MCF 10A (cell line): ENCODE measurements at regions of chr10 and their contacts with region 1.

Region 1: GRCh38 chr10:89793649-89794254 is 92.4 kb downstream of the KIF20B start:
- DNase-seq: peak; percentile 81
- H3K4me3 Mint-ChIP-seq: no peak overlapping the region
- H3K27ac Mint-ChIP-seq: no peak overlapping the region
- H3K4me1 Mint-ChIP-seq: no peaks in the 10 kb centered on the region
- H3K27me3 Mint-ChIP-seq: no peaks in the 10 kb centered on the region
- CTCF ChIP-seq: peak; percentile 70

Region 2: DNA sequence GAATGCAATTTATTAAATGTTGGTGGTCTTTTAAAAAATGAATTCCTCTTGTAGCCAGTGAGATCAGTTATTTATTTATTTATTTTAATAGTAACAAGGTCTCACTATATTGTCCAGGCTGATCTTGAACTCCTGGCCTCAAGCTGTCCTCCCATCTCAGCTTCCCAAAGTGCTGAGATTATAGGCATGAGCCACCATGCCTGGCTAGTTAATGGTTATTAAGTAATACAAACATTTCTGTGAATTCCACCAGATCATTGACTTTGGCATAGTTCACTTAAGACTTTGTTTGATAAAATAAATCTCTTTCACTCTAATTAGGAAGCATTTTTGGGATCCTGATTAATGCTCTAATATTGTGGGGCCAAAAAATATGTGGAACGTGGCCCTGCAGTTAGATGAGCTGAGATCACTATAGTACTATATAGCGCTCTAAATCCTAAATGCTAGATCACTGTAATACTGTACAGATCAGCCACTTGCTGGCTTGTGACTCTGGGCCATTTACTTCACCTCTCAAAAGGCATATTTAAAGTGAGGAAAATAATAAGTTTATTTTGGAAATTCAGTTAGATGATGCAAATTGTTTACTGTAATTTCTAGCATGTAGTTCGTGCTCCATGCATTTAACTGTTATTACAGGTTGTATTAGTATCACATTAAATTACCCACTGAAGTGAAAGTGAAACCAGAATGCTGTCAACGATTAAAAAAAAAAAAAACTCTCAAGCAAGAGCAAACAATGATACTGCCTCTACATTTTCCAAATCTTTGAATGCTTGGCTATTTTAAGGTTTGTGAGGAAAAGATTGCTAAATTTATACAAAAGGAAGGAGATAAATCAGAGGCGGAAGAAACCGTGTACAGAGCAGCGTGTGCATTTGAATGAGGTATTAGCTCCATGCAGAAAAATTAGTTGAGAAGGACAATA is 819.0 kb before region 1 on chr10:
- CTCF ChIA-PET with region 1: no interaction called
- POLR2A ChIA-PET with region 1: no interaction called
- intact Hi-C with region 1: no loop called
- DNase-seq: peak; percentile 38
- H3K4me3 Mint-ChIP-seq: peak overlapping the region; percentile 93
- H3K27ac Mint-ChIP-seq: peak overlapping the region; percentile 100
- H3K4me1 Mint-ChIP-seq: peaks cover 15% of the 10 kb centered on the region
- H3K27me3 Mint-ChIP-seq: no peaks in the 10 kb centered on the region
- CTCF ChIP-seq: no peak

Region 3: DNA sequence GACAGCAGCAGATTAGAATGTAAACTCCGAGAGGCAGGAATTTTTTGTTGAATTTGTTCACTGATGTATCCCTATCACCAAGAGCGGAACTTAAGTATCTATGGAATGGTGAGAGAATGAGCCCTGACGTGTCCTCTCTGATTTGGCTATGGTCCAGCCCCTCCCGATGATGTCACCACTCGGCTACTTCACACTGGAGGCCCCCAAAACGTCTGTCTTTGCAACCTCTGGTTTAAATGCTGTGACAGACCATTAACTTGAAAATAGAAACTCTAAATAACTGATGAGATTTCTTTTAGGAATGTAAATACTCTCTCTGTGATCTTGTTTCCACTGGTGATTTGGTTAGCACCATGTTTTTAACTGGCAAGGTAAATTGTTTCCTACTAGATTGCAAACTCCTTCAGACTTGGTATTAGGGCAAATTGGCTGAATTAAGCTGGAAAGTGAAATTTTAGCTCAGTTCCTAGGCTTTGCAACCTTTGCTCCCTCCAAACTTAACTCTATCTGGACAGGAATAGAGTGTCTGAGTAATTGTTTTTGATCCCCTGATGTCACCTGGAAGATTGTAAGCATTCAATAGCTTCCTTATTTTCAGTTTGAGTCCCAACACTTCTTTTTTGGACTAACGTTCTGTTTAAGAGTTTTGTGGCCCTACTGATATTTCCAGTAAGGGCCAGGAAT is 277.5 kb before region 1 on chr10:
- CTCF ChIA-PET with region 1: no interaction called
- POLR2A ChIA-PET with region 1: no interaction called
- intact Hi-C with region 1: no loop called
- DNase-seq: peak; percentile 64
- H3K4me3 Mint-ChIP-seq: no peak overlapping the region
- H3K27ac Mint-ChIP-seq: peak overlapping the region; percentile 33
- H3K4me1 Mint-ChIP-seq: peaks cover 14% of the 10 kb centered on the region
- H3K27me3 Mint-ChIP-seq: no peaks in the 10 kb centered on the region
- CTCF ChIP-seq: no peak

Region 4: GRCh38 chr10:89845541-89846277 is 52.0 kb after region 1 on chr10:
- CTCF ChIA-PET with region 1: no interaction called
- POLR2A ChIA-PET with region 1: no interaction called
- intact Hi-C with region 1: no loop called
- DNase-seq: peak; percentile 19
- H3K4me3 Mint-ChIP-seq: no peak overlapping the region
- H3K27ac Mint-ChIP-seq: no peak overlapping the region
- H3K4me1 Mint-ChIP-seq: peaks cover 9% of the 10 kb centered on the region
- H3K27me3 Mint-ChIP-seq: no peaks in the 10 kb centered on the region
- CTCF ChIP-seq: no peak

Region 5: DNA sequence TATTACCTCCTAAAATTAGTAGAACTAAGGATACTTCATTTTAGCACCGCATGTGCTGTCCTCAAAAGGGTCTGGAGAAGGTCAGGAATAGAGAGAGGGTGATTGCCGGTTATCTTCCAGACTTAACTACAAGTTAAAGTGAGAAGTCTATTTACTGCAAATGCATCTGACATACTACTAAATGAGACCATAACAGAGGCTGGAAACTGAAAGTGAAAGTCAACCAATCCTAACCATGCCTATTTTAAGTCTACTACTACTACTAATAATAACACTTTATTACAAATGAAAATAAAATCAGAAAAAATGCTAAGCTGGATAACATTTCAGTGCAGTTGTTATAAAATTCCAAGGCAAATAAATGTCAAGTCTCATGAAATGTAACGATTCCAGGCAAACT is 152.4 kb after region 1 on chr10:
- CTCF ChIA-PET with region 1: no interaction called
- POLR2A ChIA-PET with region 1: no interaction called
- intact Hi-C with region 1: loop called (anchors 5 kb)
- DNase-seq: no peak
- H3K4me3 Mint-ChIP-seq: no peak overlapping the region
- H3K27ac Mint-ChIP-seq: peak overlapping the region; percentile 35
- H3K4me1 Mint-ChIP-seq: no peaks in the 10 kb centered on the region
- H3K27me3 Mint-ChIP-seq: no peaks in the 10 kb centered on the region
- CTCF ChIP-seq: no peak

Region 6: DNA sequence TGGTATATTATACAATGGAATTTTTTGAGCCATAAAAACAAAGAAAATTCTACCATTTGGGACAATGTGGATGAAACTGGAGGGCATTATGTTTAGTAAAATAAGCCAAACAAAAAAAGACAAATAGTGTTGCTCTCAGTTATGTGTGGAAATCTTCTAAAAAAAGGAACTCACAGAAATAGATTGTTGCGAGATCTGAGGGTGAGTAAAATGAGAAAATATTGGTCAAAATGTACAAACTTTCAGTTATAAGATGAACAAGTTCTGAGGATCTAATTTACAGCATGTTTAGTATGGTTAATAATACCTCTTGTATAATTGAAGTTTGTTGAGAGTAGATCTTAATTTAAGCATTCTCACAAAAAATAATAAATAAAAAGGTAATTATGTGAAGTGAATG is 198.8 kb after region 1 on chr10:
- CTCF ChIA-PET with region 1: no interaction called
- POLR2A ChIA-PET with region 1: no interaction called
- intact Hi-C with region 1: no loop called
- DNase-seq: no peak
- H3K4me3 Mint-ChIP-seq: no peak overlapping the region
- H3K27ac Mint-ChIP-seq: no peak overlapping the region
- H3K4me1 Mint-ChIP-seq: no peaks in the 10 kb centered on the region
- H3K27me3 Mint-ChIP-seq: no peaks in the 10 kb centered on the region
- CTCF ChIP-seq: no peak

Region 7: GRCh38 chr10:90288391-90288933 is 494.7 kb after region 1 on chr10:
- CTCF ChIA-PET with region 1: no interaction called
- POLR2A ChIA-PET with region 1: no interaction called
- intact Hi-C with region 1: loop called (anchors 1 kb)
- DNase-seq: peak; percentile 42
- H3K4me3 Mint-ChIP-seq: no peak overlapping the region
- H3K27ac Mint-ChIP-seq: no peak overlapping the region
- H3K4me1 Mint-ChIP-seq: peaks cover 25% of the 10 kb centered on the region
- H3K27me3 Mint-ChIP-seq: no peaks in the 10 kb centered on the region
- CTCF ChIP-seq: peak; percentile 31

Region 8: GRCh38 chr10:90592638-90593302 is 799.0 kb after region 1 on chr10:
- CTCF ChIA-PET with region 1: interaction called, 5 read pairs
- POLR2A ChIA-PET with region 1: interaction called, 3 read pairs
- intact Hi-C with region 1: loop called (anchors 1 kb)
- DNase-seq: peak; percentile 76
- H3K4me3 Mint-ChIP-seq: no peak overlapping the region
- H3K27ac Mint-ChIP-seq: no peak overlapping the region
- H3K4me1 Mint-ChIP-seq: no peaks in the 10 kb centered on the region
- H3K27me3 Mint-ChIP-seq: no peaks in the 10 kb centered on the region
- CTCF ChIP-seq: peak; percentile 62

Region 9: GRCh38 chr10:90751107-90751997 is 957.6 kb after region 1 on chr10:
- CTCF ChIA-PET with region 1: interaction called, 4 read pairs
- POLR2A ChIA-PET with region 1: no interaction called
- intact Hi-C with region 1: loop called (anchors 1 kb)
- DNase-seq: peak; percentile 71
- H3K4me3 Mint-ChIP-seq: no peak overlapping the region
- H3K27ac Mint-ChIP-seq: no peak overlapping the region
- H3K4me1 Mint-ChIP-seq: peaks cover 16% of the 10 kb centered on the region
- H3K27me3 Mint-ChIP-seq: no peaks in the 10 kb centered on the region
- CTCF ChIP-seq: peak; percentile 91

Region 10: DNA sequence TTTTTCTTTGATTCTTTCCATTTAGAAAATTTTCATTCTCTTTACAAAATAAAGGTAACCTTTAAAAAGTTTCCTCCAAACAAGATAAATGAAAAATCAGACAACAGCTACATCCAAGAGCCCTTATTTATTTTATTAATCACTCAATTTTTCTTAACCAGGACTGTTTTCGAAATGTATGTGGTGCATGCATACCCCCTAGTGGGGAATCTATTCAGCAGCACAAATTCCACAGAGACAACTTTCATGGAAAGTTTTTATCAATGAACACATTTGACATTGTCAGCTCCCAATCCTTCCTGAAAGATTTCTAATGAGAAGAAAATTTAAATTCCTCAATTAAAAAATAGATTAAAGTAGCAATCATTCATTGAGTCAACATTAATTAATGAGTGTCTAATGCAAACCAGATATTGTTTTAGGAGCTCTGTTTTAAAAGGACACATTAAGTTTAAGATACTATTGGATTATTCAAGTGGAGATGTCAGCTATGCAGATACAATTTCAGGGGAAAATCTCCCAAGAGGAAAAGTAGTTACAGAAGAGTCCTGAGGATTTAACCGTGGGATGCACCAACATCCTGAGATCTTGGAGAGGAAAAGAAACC is 1069.3 kb after region 1 on chr10:
- CTCF ChIA-PET with region 1: interaction called, 5 read pairs
- POLR2A ChIA-PET with region 1: interaction called, 4 read pairs
- intact Hi-C with region 1: loop called (anchors 1 kb)
- DNase-seq: peak; percentile 61
- H3K4me3 Mint-ChIP-seq: no peak overlapping the region
- H3K27ac Mint-ChIP-seq: no peak overlapping the region
- H3K4me1 Mint-ChIP-seq: peaks cover 9% of the 10 kb centered on the region
- H3K27me3 Mint-ChIP-seq: no peaks in the 10 kb centered on the region
- CTCF ChIP-seq: peak; percentile 93